ENCODE measurements at regions of chr19 and their contacts with region 1.

Region 1: GRCh38 chr19:44002566-44003460 is at the start of gene ZNF230:
- DNase-seq: peak; percentile 92
- H3K4me3 Mint-ChIP-seq: peak within 1 kb of the TSS; percentile 99
- H3K27ac Mint-ChIP-seq: peak within 1 kb of the TSS; percentile 92
- H3K4me1 Mint-ChIP-seq: peaks cover 13% of the 10 kb centered on the region
- H3K27me3 Mint-ChIP-seq: no peaks in the 10 kb centered on the region
- total RNA-seq, gene ZNF230: 2.7 to 3.3 TPM

Region 2: DNA sequence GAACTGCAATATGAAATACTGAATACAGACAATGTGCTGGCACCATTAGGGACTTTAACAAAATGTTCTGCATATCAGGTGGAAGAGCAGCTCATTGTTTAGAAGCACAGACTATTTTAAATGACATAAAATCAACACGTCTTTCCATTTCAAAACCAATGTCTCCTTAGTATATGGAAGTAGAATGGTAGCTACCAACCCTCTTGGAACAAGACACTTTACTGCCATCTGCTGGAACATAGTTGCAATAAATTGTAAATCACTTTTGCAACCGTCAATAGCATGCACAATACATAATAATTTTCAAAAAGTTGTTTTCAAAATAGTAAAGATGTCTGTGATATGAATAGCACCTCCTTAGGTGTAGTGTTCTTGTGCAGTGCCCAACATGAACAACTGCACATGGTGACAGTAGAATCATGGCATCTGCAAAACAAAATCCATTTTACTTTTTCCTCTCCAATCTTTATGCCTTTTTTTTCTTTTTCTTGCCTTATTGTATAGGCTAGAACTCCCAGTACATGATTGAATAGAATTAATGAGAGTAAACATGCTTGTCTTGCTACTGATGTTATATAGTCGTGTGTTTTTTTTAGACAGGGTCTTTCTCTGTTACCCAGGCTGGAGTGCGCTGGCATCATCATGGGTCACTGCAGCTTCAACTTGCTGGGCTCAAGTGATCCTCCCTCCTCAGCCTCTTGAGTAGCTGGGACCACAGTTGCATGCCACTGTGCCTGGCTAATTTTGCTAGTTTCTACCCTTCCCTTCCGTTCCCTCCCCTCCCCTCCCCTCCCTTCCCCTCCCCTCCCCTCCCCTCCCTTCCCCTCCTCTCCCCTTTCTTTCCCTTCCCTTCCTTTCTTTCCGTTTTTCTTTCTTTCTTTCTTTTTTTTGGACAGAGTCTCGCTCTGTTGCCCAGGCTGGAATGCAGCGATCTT is 192.8 kb before region 1 on chr19:
- CTCF ChIA-PET with region 1: no interaction called
- intact Hi-C with region 1: no loop called
- DNase-seq: no peak
- H3K4me3 Mint-ChIP-seq: no peak overlapping the region
- H3K27ac Mint-ChIP-seq: no peak overlapping the region
- H3K4me1 Mint-ChIP-seq: peaks cover 2% of the 10 kb centered on the region
- H3K27me3 Mint-ChIP-seq: peaks cover 3% of the 10 kb centered on the region

Region 3: GRCh38 chr19:43826787-43827754 is 175.7 kb before region 1 on chr19 and contains the start of gene ZNF283:
- CTCF ChIA-PET with region 1: no interaction called
- intact Hi-C with region 1: loop called (anchors 1 kb)
- DNase-seq: peak; percentile 92
- H3K4me3 Mint-ChIP-seq: peak within 1 kb of the TSS; percentile 88
- H3K27ac Mint-ChIP-seq: peak within 1 kb of the TSS; percentile 75
- H3K4me1 Mint-ChIP-seq: peaks cover 17% of the 10 kb centered on the region
- H3K27me3 Mint-ChIP-seq: no peaks in the 10 kb centered on the region
- total RNA-seq, gene ZNF283: 6.8 to 7.7 TPM

Region 4: DNA sequence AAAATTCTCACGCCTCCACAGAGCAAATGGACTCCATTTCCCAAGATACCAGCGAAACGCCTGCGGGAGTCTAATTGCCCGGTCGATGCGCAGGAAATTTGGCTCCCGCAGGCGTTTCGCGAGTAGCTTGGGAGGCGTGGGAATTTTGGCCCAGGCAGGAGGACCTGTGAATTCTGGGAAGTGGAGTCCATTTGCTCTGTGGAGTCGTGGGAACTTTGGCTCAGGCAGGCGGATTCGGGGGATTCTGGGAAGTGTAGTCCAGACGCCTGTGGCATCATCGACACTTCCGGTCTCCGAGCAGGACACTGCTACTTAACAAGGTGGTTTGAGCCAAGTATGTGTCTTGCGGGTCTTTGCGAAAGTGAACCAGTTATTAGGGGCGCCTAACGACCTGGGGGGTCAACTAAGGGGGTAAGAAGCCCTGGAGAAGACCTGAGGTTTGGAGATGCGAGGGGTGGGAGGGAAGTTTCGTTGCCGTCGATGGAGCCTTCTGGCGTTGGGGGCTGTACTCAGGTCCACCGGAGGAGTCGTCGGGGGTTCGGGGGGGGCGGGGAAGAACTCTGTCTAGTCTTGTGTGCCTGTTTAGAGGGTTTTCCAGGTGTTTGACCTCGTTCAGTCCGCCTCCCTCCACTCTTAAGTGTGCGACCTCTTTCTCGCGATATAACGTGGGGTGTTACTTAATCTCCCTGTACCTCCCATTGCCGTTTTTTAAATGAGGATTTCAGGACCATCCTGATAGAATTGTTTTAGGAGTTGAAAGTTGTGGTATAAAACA is 18.7 kb before region 1 on chr19 and contains the start of gene ZNF155:
- CTCF ChIA-PET with region 1: interaction called, 3 read pairs
- intact Hi-C with region 1: loop called (anchors 1 kb)
- DNase-seq: peak; percentile 83
- H3K4me3 Mint-ChIP-seq: peak within 1 kb of the TSS; percentile 98
- H3K27ac Mint-ChIP-seq: peak within 1 kb of the TSS; percentile 91
- H3K4me1 Mint-ChIP-seq: peaks cover 8% of the 10 kb centered on the region
- H3K27me3 Mint-ChIP-seq: no peaks in the 10 kb centered on the region
- total RNA-seq, gene ZNF155: 2.9 to 3.1 TPM

Region 5: DNA sequence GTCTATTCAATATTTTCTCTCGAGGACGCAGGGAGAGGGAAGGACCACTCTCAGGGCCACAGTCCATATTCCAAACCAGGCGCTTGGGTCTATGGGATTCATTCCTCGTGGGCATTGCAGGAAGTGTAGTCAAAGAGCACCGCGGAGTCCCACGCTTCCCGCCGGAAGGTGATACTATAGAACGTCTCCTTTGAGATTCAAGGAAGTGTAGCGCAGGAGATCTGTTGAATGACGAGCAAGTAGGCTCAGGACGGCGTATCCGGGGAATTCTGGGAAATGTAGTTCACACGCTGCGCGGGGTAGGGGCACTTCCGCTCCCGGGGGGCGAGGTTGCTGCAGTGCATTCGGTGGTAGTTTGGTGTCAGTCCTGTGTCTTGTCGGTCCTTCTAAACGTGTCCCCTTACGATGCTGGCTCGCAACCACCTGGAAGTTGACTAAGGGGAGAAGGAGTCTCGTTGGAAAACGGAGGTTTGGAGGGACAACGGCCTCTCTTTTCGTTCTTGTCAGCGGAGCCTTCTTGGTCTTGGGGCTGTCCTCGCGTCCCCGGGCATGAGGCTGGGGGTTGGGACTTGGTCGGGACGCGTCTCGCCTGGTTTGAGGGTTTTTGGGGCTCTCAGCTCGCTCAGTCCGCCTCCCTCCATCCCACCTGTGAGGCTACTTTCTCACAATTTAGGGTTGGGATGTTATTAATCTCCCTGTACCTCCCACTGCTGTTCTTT is 69.2 kb after region 1 on chr19 and contains the start of gene ZNF284:
- CTCF ChIA-PET with region 1: no interaction called
- intact Hi-C with region 1: loop called (anchors 1 kb)
- DNase-seq: peak; percentile 87
- H3K4me3 Mint-ChIP-seq: peak within 1 kb of the TSS; percentile 86
- H3K27ac Mint-ChIP-seq: peak within 1 kb of the TSS; percentile 13
- H3K4me1 Mint-ChIP-seq: peaks cover 19% of the 10 kb centered on the region
- H3K27me3 Mint-ChIP-seq: no peaks in the 10 kb centered on the region
- total RNA-seq, gene ZNF284: 0.76 to 0.86 TPM

Region 6: DNA sequence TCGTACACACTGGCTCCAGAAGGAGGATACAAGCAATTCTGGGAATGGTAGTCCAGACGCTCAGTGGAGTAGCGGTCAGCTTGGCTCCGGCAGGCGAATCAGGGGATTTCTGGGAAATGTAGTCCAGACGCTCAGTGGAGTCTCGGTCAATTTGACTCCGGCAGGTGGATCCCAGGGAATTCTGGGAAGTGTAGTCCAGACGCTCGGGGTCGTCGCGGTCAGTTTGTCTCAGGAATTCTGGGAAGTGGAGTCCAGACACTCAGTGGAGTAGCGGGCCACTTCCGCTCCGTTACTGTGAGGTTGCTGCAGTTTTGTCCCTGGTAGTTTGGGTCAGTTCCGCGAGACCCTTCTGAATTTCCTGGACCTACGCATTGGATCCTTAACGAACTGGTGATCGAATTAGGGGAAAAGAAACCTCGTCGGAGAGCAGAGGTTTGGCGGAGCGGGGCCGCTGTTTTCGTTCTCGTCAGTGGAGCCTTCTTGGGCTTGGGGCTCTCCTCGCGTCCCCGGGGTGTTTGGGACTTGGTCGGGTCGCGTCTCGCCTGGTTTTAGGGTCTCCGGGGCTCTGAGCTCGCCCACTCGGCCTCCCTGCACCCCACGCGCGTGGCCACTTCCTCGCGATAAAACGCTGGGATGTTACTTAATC is 110.4 kb after region 1 on chr19 and contains the start of gene ZNF225:
- CTCF ChIA-PET with region 1: no interaction called
- intact Hi-C with region 1: loop called (anchors 1 kb)
- DNase-seq: peak; percentile 93
- H3K4me3 Mint-ChIP-seq: peak within 1 kb of the TSS; percentile 95
- H3K27ac Mint-ChIP-seq: peak within 1 kb of the TSS; percentile 78
- H3K4me1 Mint-ChIP-seq: peaks cover 16% of the 10 kb centered on the region
- H3K27me3 Mint-ChIP-seq: no peaks in the 10 kb centered on the region
- total RNA-seq, gene ZNF225: 2.1 to 2.2 TPM

Region 7: GRCh38 chr19:44304659-44305193 is 301.9 kb after region 1 on chr19 and contains the start of gene ZNF235:
- CTCF ChIA-PET with region 1: no interaction called
- intact Hi-C with region 1: loop called (anchors 5 kb)
- DNase-seq: peak; percentile 87
- H3K4me3 Mint-ChIP-seq: peak within 1 kb of the TSS; percentile 77
- H3K27ac Mint-ChIP-seq: peak within 1 kb of the TSS; percentile 16
- H3K4me1 Mint-ChIP-seq: peaks cover 9% of the 10 kb centered on the region
- H3K27me3 Mint-ChIP-seq: no peaks in the 10 kb centered on the region
- total RNA-seq, gene ZNF235: 1.5 to 1.6 TPM